Activated CD4-positive, alpha-beta memory T cell treated with anti-CD3 and anti-CD28 coated beads for 36 hours (primary cell): ENCODE measurements at regions of chr2 and their contacts with region 1.

Region 1: DNA sequence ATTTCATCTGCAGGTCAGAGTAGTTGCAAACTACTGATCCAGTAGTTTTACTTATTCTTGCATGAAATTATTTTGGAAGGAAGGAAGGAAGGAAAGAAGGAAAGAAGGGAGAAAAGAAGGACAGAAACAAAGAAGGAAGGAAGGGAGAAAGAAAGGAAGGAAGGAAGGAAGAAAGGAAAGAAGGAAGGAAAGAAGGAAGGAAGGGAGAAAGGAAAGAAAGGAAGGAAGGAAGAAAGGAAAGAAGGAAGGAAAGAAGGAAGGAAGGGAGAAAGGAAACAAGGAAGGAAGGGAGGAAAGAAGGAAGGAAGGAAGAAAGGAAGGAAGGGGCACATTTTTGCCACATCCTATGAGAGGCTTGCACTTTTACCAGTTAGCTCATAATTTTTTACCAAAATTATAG is 186.2 kb downstream of the LRRTM4 start:
- DNase-seq: no peak
- H3K4me3 Mint-ChIP-seq: no peak overlapping the region
- H3K27ac Mint-ChIP-seq: no peak overlapping the region
- H3K4me1 Mint-ChIP-seq: no peaks in the 10 kb centered on the region
- H3K27me3 Mint-ChIP-seq: no peaks in the 10 kb centered on the region

Region 2: GRCh38 chr2:77270433-77270832 is 65.6 kb before region 1 on chr2:
- CTCF ChIA-PET with region 1: no interaction called
- POLR2A ChIA-PET with region 1: no interaction called
- intact Hi-C with region 1: no loop called
- DNase-seq: no peak
- H3K4me3 Mint-ChIP-seq: no peak overlapping the region
- H3K27ac Mint-ChIP-seq: no peak overlapping the region
- H3K4me1 Mint-ChIP-seq: no peaks in the 10 kb centered on the region
- H3K27me3 Mint-ChIP-seq: no peaks in the 10 kb centered on the region

Region 3: DNA sequence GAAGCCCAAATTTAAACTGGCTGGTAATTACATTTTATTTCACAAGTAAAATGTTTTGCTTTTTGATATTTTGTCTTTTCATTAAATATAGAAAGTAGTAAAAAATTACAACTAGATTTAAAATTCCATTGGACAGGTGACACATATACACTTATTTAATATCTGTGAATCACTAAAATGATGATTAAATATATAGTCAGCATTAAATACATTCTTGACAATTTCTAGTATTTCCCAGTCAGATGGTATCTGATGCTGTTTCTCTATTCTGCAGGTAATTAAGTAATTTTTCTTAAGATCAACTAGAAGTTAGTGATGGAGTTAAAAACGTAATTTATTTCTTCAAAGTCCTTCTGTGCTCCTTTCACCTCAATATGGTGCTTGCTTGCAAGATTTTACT is 51.7 kb before region 1 on chr2:
- CTCF ChIA-PET with region 1: no interaction called
- POLR2A ChIA-PET with region 1: no interaction called
- intact Hi-C with region 1: loop called (anchors 2 kb)
- DNase-seq: no peak
- H3K4me3 Mint-ChIP-seq: no peak overlapping the region
- H3K27ac Mint-ChIP-seq: no peak overlapping the region
- H3K4me1 Mint-ChIP-seq: no peaks in the 10 kb centered on the region
- H3K27me3 Mint-ChIP-seq: no peaks in the 10 kb centered on the region

Region 4: DNA sequence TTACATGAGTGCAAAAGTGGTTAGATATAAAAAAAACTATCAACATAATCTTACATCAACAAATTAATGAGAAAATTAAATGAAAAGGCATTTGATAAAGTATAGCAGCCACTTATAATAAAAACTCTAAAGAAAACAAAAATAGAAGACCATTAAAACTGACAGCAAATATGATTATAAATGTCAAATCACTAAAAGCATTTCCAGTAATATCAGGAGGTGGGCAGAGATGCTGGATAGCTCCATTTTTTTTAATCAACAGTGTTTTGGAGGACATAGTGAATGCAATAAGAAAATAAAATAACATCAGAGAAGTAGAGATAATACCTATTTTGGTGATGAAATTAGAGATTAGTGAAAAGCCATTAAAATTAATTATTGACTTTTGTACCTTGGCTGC is 12.8 kb after region 1 on chr2:
- CTCF ChIA-PET with region 1: no interaction called
- POLR2A ChIA-PET with region 1: no interaction called
- intact Hi-C with region 1: no loop called
- DNase-seq: no peak
- H3K4me3 Mint-ChIP-seq: no peak overlapping the region
- H3K27ac Mint-ChIP-seq: no peak overlapping the region
- H3K4me1 Mint-ChIP-seq: no peaks in the 10 kb centered on the region
- H3K27me3 Mint-ChIP-seq: no peaks in the 10 kb centered on the region

Region 5: DNA sequence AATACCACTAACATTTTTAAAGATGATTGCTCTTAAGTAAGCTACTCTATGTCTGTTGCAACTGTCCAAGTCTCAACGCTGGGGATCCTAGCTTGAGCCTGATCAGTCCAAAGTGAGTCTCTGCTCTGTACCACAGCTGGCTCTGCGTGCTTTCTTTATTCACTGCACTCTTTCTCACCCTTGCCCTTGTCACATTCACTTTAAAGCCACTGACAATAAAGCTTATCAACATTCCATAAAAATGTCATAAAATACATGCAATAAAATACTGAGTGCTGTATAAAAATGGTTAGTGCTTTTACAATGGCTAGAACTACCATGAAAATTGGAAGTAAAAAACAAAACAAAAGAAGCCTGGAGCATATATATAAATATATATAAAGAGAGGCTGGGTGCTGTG is 231.7 kb after region 1 on chr2:
- CTCF ChIA-PET with region 1: no interaction called
- POLR2A ChIA-PET with region 1: no interaction called
- intact Hi-C with region 1: no loop called
- DNase-seq: no peak
- H3K4me3 Mint-ChIP-seq: no peak overlapping the region
- H3K27ac Mint-ChIP-seq: no peak overlapping the region
- H3K4me1 Mint-ChIP-seq: no peaks in the 10 kb centered on the region
- H3K27me3 Mint-ChIP-seq: no peaks in the 10 kb centered on the region